ENCODE measurements at regions of chr12 and their contacts with region 1.

Region 1: DNA sequence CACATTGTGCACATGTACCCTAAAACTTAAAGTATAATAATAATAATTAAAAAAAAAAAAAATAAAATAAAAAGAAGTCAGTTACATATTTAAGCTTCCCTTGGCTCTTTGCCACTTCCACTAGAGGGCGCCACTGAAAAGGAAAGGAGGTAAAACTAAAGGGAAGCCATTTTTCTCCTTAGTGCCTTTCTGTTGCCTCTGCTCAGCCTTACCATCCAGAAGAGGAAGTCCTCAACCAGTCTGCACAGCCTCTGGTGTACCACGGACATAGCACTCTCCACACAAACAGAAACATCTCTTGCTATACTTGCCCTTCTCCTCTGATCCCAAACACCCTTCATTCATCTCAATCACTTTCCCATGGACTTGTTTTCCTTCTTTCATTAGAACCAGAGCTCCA is 169.0 kb upstream of the EEA1 start:
- DNase-seq: peak; percentile 90
- H3K4me3 Mint-ChIP-seq: no peak overlapping the region
- H3K27ac Mint-ChIP-seq: no peak overlapping the region
- H3K4me1 Mint-ChIP-seq: peaks cover 9% of the 10 kb centered on the region
- H3K27me3 Mint-ChIP-seq: no peaks in the 10 kb centered on the region

Region 2: DNA sequence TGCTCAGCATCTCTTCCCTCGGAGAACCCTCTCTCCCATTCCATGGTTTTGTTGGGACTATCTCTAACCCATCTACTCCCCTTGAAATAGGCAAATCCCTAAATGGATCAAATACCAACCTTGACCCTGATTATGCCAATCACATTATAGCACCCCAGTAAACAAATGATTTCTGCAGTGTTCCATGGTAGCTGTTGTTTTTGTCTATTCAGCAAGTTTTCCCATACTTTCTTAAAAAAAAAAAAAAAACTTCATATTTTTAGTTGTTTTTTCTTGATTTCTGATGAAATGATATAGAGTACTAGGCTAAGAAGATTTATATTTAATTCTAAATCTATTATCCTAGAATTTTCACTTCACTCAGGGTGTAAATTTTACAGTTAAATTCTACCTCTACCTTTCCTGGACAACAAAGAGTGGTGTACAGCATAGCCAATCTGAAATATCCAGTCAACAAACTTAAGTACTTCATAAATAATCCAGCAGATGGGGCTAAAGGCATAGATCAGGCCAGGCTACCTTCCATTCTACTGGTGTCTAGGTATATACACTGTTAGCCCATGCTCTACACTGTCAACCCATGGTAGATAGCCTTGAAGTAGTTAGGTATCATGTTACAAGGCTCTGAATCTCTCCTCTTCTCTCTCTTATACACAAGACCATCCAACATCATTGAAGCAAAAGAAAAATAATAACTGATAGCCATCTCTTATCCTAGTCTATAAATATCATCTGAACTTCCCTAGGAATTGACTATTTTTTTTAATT is 313.1 kb before region 1 on chr12:
- intact Hi-C with region 1: loop called (anchors 10 kb)
- DNase-seq: peak; percentile 82
- H3K4me3 Mint-ChIP-seq: no peak overlapping the region
- H3K27ac Mint-ChIP-seq: no peak overlapping the region
- H3K4me1 Mint-ChIP-seq: peaks cover 11% of the 10 kb centered on the region
- H3K27me3 Mint-ChIP-seq: no peaks in the 10 kb centered on the region

Region 3: GRCh38 chr12:93137656-93138612 is 39.9 kb after region 1 on chr12:
- intact Hi-C with region 1: loop called (anchors 5 kb)
- DNase-seq: no peak
- H3K4me3 Mint-ChIP-seq: no peak overlapping the region
- H3K27ac Mint-ChIP-seq: no peak overlapping the region
- H3K4me1 Mint-ChIP-seq: peaks cover 18% of the 10 kb centered on the region
- H3K27me3 Mint-ChIP-seq: no peaks in the 10 kb centered on the region

Region 4: GRCh38 chr12:93167841-93168492 is 69.9 kb after region 1 on chr12:
- intact Hi-C with region 1: no loop called
- DNase-seq: peak; percentile 62
- H3K4me3 Mint-ChIP-seq: peak overlapping the region; percentile 17
- H3K27ac Mint-ChIP-seq: peak overlapping the region; percentile 68
- H3K4me1 Mint-ChIP-seq: peaks cover 13% of the 10 kb centered on the region
- H3K27me3 Mint-ChIP-seq: no peaks in the 10 kb centered on the region

Region 5: GRCh38 chr12:93378373-93379325 is 280.6 kb after region 1 on chr12:
- intact Hi-C with region 1: loop called (anchors 5 kb)
- DNase-seq: peak; percentile 90
- H3K4me3 Mint-ChIP-seq: peak overlapping the region; percentile 100
- H3K27ac Mint-ChIP-seq: peak overlapping the region; percentile 100
- H3K4me1 Mint-ChIP-seq: peaks cover 37% of the 10 kb centered on the region
- H3K27me3 Mint-ChIP-seq: no peaks in the 10 kb centered on the region

Region 6: DNA sequence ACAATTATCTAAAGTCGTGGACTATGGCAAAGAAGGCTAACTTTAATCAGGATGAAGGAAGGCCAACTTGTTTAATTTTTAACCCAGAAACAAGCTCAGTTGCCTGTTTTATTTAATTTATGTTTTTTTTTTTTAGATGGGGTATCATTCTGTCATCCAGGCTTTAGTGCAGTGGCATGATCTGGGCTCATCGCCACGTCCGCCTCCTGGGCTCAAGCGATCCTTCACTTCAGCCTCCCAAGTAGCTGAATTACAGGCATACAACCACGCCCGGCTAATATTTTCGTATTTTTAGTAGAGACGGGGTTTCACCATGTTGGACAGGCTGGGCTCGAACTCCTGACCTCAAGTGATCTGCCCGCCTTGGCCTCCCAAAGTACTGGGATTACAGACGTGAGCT is 299.3 kb after region 1 on chr12:
- intact Hi-C with region 1: loop called (anchors 2 kb)
- DNase-seq: peak; percentile 51
- H3K4me3 Mint-ChIP-seq: no peak overlapping the region
- H3K27ac Mint-ChIP-seq: no peak overlapping the region
- H3K4me1 Mint-ChIP-seq: peaks cover 3% of the 10 kb centered on the region
- H3K27me3 Mint-ChIP-seq: no peaks in the 10 kb centered on the region